ENCODE measurements at regions of chr9 and their contacts with region 1.

Region 1: GRCh38 chr9:133144137-133144903 is 19.4 kb downstream of the GBGT1 start:
- DNase-seq: peak; percentile 82
- ATAC-seq: peak; percentile 49

Region 2: DNA sequence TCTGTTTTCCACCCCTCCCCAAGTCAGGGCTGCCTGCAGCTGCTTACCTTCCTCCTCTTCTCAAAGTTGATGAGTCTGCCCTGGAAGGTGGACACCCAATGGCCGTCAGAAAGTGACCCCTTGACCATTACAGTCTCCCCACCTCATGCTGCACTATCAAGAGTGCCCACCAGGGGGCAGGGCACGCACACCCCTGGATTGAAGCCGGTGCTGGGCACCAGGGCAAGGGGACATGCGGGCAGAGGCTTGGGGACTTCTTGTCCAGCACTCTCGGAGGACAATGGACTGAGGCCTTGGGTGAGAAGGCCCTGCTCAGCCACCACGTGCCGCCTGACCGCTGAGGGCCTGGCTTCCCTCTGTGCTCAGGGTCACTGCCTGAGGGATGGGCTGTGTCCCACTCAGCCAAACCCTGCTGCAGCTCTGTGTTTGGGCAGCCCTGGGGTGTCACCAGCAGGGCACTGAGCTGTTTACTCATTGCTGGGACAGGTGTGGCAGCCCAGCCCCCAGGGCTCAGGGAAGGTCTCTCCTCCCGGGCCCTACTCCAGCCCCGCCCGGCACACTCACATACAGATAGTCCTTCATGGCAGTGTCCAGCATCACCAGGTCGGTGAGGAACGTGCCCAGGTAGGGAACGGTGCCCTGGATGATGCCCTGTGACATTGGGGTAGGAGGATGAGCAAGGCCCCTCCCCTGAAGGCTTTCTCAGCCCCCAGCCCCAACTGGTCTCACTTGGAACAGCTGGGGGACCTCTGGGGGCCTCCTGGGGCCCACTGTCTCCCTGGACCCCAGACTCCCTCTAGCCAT is 40.9 kb before region 1 on chr9:
- intact Hi-C with region 1: loop called (anchors 1 kb)
- DNase-seq: peak; percentile 86
- ATAC-seq: peak; percentile 80

Region 3: GRCh38 chr9:133440874-133441273 is 296.6 kb after region 1 on chr9:
- intact Hi-C with region 1: no loop called
- DNase-seq: no peak
- ATAC-seq: no peak

Measured in sciatic nerve (tissue), 2 donors.